ENCODE measurements at regions of chr13 and their contacts with region 1.

Region 1: DNA sequence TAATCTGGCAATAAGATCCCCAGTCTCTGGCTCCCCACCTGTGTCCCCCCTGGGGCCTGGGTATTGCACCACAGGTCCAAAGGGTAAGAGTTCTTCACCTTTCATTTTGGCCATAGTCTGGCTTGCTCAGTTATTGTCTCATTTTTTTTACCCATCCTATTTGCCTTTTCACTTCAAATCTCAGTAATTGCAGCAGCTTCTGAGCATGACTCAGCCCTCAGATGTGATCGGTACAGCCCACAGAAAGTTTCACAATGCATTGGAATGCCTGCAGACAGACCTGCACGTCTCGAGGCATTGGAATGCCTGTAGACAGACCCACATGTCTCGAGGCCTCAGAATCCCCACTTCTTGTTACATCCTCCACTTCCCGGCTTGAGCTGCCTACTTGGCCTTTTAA is 173.6 kb downstream of the NUFIP1 start:
- DNase-seq: peak; percentile 66
- H3K4me3 Mint-ChIP-seq: no peak overlapping the region
- H3K27ac Mint-ChIP-seq: no peak overlapping the region
- H3K4me1 Mint-ChIP-seq: peaks cover 20% of the 10 kb centered on the region
- H3K27me3 Mint-ChIP-seq: peaks cover 17% of the 10 kb centered on the region

Region 2: DNA sequence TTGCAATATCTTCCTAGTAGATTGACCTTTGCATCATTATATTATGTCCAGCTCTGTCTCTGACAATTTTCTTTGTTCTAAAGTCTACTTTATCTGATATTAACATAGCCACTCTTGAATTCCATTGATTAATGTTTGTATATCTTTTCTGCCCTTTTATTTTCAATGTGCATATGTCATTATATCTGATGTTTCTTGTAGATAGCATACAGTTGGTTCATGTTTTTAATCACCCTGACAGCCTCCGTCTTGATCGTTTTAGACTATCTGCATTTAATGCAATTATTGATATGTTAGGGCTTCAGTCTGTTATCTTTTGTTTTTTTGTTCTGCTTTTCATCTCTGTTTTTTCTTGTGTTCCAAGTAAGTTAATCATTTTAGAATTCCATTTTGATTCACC is 1188.6 kb before region 1 on chr13:
- CTCF ChIA-PET with region 1: no interaction called
- intact Hi-C with region 1: no loop called
- DNase-seq: no peak
- H3K4me3 Mint-ChIP-seq: no peak overlapping the region
- H3K27ac Mint-ChIP-seq: no peak overlapping the region
- H3K4me1 Mint-ChIP-seq: no peaks in the 10 kb centered on the region
- H3K27me3 Mint-ChIP-seq: peaks cover 8% of the 10 kb centered on the region

Region 3: GRCh38 chr13:44648392-44649103 is 167.1 kb before region 1 on chr13:
- CTCF ChIA-PET with region 1: no interaction called
- intact Hi-C with region 1: loop called (anchors 2 kb)
- DNase-seq: no peak
- H3K4me3 Mint-ChIP-seq: no peak overlapping the region
- H3K27ac Mint-ChIP-seq: no peak overlapping the region
- H3K4me1 Mint-ChIP-seq: peaks cover 14% of the 10 kb centered on the region
- H3K27me3 Mint-ChIP-seq: peaks cover 22% of the 10 kb centered on the region

Region 4: GRCh38 chr13:44710576-44710975 is 105.0 kb before region 1 on chr13:
- CTCF ChIA-PET with region 1: no interaction called
- intact Hi-C with region 1: loop called (anchors 5 kb)
- DNase-seq: peak; percentile 53
- H3K4me3 Mint-ChIP-seq: no peak overlapping the region
- H3K27ac Mint-ChIP-seq: no peak overlapping the region
- H3K4me1 Mint-ChIP-seq: peaks cover 11% of the 10 kb centered on the region
- H3K27me3 Mint-ChIP-seq: peaks cover 4% of the 10 kb centered on the region

Region 5: GRCh38 chr13:44758630-44759383 is 56.8 kb before region 1 on chr13:
- CTCF ChIA-PET with region 1: no interaction called
- intact Hi-C with region 1: loop called (anchors 1 kb)
- DNase-seq: peak; percentile 62
- H3K4me3 Mint-ChIP-seq: no peak overlapping the region
- H3K27ac Mint-ChIP-seq: peak overlapping the region; percentile 52
- H3K4me1 Mint-ChIP-seq: peaks cover 14% of the 10 kb centered on the region
- H3K27me3 Mint-ChIP-seq: peaks cover 7% of the 10 kb centered on the region

Region 6: DNA sequence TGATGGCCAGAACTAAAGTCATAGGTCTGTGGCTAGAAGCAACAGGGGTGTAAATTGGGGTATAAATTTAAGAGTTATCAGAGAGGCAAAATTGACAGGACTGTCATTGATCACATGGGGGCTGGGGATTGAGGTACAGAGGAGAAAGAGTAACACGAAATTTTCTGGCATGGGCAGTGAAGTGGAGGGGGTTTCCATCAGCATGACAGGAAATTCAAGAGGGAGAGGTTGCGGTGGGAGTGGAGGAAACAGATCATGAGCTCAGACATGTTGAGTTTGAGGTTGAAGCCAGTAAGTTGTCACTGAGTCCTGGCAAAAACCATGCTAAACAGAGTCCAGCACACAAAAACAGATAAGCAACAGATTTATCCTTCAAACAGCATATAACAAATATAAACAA is 47.4 kb before region 1 on chr13:
- CTCF ChIA-PET with region 1: no interaction called
- intact Hi-C with region 1: loop called (anchors 1 kb)
- DNase-seq: peak; percentile 72
- H3K4me3 Mint-ChIP-seq: no peak overlapping the region
- H3K27ac Mint-ChIP-seq: peak overlapping the region; percentile 85
- H3K4me1 Mint-ChIP-seq: peaks cover 27% of the 10 kb centered on the region
- H3K27me3 Mint-ChIP-seq: no peaks in the 10 kb centered on the region

Region 7: GRCh38 chr13:46071590-46072249 is 1256.1 kb after region 1 on chr13:
- CTCF ChIA-PET with region 1: no interaction called
- intact Hi-C with region 1: no loop called
- DNase-seq: no peak
- H3K4me3 Mint-ChIP-seq: no peak overlapping the region
- H3K27ac Mint-ChIP-seq: no peak overlapping the region
- H3K4me1 Mint-ChIP-seq: no peaks in the 10 kb centered on the region
- H3K27me3 Mint-ChIP-seq: no peaks in the 10 kb centered on the region

Measured in activated naive CD4-positive, alpha-beta T cell treated with anti-CD3 and anti-CD28 coated beads for 36 hours (primary cell).